Activated T-helper 2 cell treated with anti-CD3 and anti-CD28 coated beads, Interferon-gamma antibody, Interleukin-2, Interleukin-4, amounts not matched to agents 10 μg/mL and 5 μg/mL and 100 μg/mL, durations not matched to agents 14 hours and 24 hours and 36 hours (primary cell): ENCODE measurements at regions of chr11 and their contacts with region 1.

Region 1: DNA sequence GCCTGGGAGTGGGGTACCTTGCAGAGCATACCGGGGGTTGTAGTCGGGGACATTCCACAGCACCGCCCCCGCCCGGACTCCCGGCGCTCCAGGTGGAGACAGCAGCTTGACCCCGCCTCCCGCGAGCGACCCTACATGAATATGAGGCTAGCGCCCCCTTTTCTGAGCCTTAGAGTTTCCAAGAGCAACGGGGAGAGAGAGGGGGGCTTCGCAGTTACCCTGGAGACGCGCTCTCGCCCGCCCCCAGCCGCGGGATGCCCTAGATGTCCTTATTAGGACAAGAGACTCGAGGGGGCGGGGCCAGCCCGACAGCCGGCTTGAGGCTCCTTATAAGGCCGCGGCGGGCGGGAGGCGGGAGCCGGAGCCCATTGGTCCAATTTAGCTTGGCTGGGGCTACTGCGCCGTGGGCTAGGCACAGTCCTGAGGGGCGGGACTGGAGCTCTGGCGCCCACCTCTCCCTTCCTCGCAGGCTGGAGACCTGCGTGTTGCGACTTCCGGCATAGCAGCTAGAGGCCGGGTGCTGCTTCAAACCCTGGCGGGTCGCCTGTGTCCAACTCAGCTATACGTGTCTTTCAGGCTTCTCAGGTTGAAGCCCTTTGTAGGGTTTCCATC is 927 bp upstream of the MUS81 start:
- DNase-seq: peak; percentile 98
- H3K4me3 Mint-ChIP-seq: peak overlapping the region; percentile 94
- H3K27ac Mint-ChIP-seq: peak overlapping the region; percentile 97
- H3K4me1 Mint-ChIP-seq: peaks cover 34% of the 10 kb centered on the region
- H3K27me3 Mint-ChIP-seq: no peaks in the 10 kb centered on the region

Region 2: DNA sequence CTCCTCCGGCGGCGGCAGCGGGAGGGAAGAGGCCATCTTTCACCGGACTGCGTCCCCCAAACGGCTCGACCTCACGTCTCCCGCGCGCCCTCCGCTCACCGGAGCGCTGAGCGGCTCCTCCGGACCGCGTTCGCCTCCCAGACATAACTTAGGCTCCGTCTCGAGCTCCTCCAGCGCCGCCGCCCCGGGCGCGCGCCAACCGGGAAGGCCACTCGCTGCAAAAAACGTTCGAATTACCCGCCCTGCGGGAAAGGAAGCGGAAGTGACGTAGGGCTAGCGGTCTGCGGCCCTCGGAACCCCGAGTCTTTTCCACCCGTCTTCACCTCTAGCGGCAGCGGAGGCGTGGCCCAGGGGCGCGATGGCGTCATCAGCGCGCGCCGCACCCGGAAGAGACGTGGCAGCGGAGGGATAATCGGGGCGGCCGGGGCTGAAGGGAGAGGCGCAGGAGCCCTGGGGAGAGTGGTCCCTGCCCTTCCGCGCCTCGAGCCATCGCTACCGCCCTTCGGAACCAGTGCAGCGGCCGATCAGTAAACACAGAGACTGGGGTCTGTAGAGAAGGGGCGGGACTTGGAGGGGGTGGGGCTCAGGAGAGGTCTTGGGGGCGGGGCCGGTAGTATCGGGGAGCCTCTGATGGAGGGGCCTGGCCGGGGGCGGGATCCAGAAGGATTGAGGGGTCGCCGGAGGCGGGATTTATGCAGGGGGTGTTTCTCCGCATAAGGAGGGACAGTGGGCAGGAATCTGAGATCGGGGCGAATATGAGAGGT is 775.3 kb before region 1 on chr11 and contains the starts of genes CDCA5 and ZFPL1:
- intact Hi-C with region 1: loop called (anchors 10 kb)
- DNase-seq: peak; percentile 96
- H3K4me3 Mint-ChIP-seq: peak within 1 kb of the TSS; percentile 97
- H3K27ac Mint-ChIP-seq: peak within 1 kb of the TSS; percentile 97
- H3K4me1 Mint-ChIP-seq: peaks cover 32% of the 10 kb centered on the region
- H3K27me3 Mint-ChIP-seq: no peaks in the 10 kb centered on the region
- total RNA-seq, gene CDCA5: 82.0 and 86.8 TPM in 2 replicates
- total RNA-seq, gene ZFPL1: 34.9 and 37.2 TPM in 2 replicates

Region 3: GRCh38 chr11:65662799-65663638 is 196.3 kb before region 1 on chr11 and contains the start of gene RELA:
- intact Hi-C with region 1: loop called (anchors 2 kb)
- DNase-seq: peak; percentile 87
- H3K4me3 Mint-ChIP-seq: peak within 1 kb of the TSS; percentile 86
- H3K27ac Mint-ChIP-seq: peak within 1 kb of the TSS; percentile 92
- H3K4me1 Mint-ChIP-seq: peaks cover 19% of the 10 kb centered on the region
- H3K27me3 Mint-ChIP-seq: no peaks in the 10 kb centered on the region
- total RNA-seq, gene RELA: 86.9 and 89.3 TPM in 2 replicates

Region 4: DNA sequence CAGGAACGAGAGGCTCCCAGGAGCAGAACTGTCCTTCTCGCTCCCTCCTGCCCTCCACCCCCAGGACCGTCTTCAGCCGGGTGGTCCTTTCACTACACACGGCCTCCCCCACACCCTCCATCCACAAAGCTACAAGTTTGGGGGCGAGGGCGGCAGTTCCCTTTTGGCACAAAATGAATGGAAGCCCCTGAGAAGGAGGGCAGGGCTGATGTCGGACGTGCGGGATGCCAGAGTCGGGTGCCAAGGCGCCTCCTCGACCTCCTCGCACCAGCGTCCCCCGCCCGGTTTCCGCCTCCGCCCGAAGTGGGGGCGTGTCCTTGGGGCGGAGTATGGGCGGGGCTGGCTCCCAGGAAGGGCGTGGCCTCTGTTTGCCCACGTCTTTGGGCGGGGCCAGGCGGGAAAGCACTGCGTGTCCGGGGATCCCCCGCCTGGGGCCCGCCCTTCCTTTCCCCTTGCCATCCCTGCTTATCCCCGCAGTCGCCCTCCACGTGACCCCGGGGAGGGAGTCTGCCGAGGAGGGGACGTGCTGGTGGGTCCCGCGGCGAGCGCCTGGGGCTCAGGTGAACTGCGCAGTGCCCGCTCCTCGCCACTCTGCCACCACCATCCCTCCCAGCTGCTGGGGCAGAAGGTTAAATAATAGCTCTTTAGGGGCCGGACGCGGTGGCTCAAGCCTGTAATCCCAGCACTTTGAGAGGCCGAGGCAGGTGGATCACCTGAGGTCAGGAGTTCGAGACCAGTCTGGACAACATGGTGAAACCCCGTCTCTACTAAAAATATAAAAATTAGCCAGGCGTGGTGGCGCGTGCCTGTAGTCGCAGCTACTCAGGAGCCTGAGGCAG is 14.2 kb after region 1 on chr11:
- intact Hi-C with region 1: loop called (anchors 1 kb)
- DNase-seq: peak; percentile 95
- H3K4me3 Mint-ChIP-seq: peak overlapping the region; percentile 91
- H3K27ac Mint-ChIP-seq: peak overlapping the region; percentile 79
- H3K4me1 Mint-ChIP-seq: peaks cover 13% of the 10 kb centered on the region
- H3K27me3 Mint-ChIP-seq: no peaks in the 10 kb centered on the region

Region 5: GRCh38 chr11:65919146-65920033 is 60.1 kb after region 1 on chr11 and contains the start of gene DRAP1:
- intact Hi-C with region 1: loop called (anchors 1 kb)
- DNase-seq: peak; percentile 97
- H3K4me3 Mint-ChIP-seq: peak within 1 kb of the TSS; percentile 88
- H3K27ac Mint-ChIP-seq: peak within 1 kb of the TSS; percentile 85
- H3K4me1 Mint-ChIP-seq: peaks cover 19% of the 10 kb centered on the region
- H3K27me3 Mint-ChIP-seq: no peaks in the 10 kb centered on the region
- total RNA-seq, gene DRAP1: 116 and 118 TPM in 2 replicates

Region 6: DNA sequence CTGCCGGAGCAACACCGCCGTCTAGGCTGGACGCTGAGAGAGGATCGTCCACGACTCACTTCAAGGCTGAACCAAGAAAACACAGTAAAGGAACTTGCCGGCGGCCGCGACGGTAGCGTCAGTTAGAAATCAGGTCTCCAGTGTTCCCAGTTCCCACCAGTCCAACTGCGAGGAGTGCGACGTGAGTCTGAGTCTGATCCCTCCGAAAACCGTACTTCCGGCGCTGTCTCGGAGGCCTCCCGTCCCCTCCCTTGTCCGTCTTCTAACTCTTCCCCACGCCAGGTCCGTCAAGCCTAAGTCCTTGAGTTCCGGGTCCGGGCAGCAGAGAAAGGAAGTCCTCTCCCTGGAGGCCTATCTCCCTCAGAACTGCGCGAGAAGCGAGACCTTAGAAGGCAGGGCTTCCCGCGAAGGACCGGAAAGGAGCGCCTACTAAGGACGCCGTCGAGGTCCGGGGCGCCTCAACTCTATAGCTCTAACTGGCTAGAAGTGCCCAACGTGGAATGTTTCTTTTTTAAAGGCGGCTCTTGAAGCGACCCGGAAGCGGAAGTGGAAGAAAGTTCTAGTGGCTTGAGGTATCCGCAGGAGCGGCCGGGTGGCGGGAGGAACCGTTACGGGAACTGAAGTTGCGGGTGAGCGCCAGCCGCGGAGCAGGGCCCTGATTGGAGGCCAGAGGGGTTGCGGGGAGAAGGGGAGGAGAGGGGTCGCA is 142.8 kb after region 1 on chr11 and contains the starts of genes BANF1 and EIF1AD:
- intact Hi-C with region 1: loop called (anchors 1 kb)
- DNase-seq: peak; percentile 96
- H3K4me3 Mint-ChIP-seq: peak within 1 kb of the TSS; percentile 98
- H3K27ac Mint-ChIP-seq: peak within 1 kb of the TSS; percentile 99
- H3K4me1 Mint-ChIP-seq: peaks cover 20% of the 10 kb centered on the region
- H3K27me3 Mint-ChIP-seq: no peaks in the 10 kb centered on the region
- total RNA-seq, gene BANF1: 272 and 281 TPM in 2 replicates
- total RNA-seq, gene EIF1AD: 64.5 and 65.2 TPM in 2 replicates